ENCODE measurements at regions of chr12 and their contacts with region 1.

Region 1: DNA sequence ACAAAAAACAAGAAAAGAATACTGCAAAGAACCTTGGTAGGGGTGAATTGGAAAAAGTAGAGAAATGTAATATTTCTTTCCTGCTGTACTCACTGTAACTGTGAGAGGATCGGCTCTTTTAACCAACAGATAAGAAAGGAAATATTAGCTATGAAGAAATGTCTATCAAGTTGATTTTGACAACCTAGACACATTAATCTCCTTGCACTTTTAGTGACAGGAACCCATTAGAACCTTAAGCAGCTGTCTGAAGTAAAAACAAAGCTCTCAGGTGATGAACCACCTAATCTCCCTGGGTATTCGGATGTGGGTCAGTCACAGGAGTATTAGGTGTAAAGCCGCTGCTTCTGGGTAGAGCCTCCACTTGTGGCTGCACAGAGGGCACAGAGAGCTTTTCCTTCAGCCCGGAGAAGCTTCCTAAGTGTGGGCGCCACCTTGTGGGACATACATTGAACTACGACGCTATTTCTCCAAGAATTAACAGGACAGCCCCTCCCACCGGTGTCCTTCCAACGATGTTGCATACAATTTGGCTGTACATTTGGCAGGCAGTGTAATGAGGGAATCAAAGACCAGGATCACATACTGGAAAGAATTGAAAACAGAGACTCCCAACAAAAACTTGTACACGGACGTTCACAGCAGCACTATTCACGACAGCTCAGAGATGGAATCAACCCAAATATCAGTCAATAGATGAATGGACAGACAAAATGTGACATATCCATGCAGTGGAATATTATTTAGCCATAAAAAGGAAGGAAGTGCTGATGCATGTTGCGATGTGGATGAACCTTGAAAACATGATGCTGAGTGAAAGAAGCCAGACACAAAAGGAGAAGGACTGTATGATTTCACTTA is 28.9 kb upstream of the MAPKAPK5 start:
- DNase-seq: no peak
- H3K4me3 ChIP-seq: no peak overlapping the region
- H3K27me3 ChIP-seq: no peaks in the 10 kb centered on the region
- CTCF ChIP-seq: peak; percentile 83

Region 2: DNA sequence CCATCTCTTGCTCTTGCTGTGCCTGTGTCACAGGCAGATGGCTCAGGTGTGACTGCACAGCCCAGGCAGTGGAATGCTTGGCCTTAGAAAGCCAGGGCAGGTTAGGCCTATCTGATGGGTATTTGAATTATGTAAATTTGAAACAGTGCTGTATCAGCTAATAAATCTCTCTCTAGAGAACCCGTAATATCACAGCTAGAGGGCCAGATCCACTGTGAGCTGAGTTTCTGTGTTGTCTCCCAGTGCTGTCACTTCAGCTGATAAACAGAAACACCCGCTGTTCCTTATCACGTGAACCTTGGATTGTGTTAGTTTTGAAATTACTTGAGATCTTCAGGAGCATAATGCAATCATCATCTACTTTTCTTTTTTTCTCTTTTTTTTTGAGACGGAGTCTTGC is 67.9 kb before region 1 on chr12:
- CTCF ChIA-PET with region 1: interaction called, 12 read pairs
- POLR2A ChIA-PET with region 1: no interaction called
- DNase-seq: no peak
- H3K4me3 ChIP-seq: no peak overlapping the region
- H3K27me3 ChIP-seq: no peaks in the 10 kb centered on the region
- CTCF ChIP-seq: no peak

Region 3: DNA sequence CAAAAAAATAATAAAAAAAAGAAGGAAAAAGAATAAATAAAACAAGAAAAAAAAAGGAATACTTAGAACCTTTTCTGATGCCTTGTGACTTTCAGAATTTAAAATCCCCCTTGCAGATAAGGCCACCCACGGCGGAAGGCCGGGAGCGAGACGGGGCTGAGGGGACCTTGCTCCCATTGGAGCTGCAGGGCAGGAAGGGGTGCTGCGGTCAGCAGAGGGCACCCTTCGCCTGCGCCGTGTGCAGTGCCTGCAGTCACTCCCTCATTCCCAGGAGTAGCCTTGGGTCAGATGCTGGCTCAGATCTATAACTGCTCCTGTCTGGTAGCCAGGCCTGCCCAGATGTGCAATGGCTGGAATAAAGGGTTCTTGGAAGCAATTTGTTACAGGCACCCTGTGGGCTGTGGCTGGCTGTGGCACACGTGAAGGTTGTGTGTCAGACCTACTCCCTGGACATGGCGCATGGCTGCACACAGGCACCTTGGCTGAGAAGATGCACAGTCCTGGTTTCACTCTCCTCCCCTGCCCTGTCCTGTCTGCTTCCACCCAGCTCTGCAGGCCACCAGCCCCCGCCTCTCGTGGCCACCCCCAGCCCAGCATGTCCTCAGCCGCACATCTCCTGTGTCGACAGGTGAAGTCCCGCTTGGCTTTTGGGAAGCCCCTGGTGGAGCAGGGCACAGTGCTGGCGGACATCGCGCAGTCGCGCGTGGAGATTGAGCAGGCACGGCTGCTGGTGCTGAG is 59.8 kb before region 1 on chr12:
- CTCF ChIA-PET with region 1: interaction called, 106 read pairs
- POLR2A ChIA-PET with region 1: no interaction called
- DNase-seq: no peak
- H3K4me3 ChIP-seq: no peak overlapping the region
- H3K27me3 ChIP-seq: no peaks in the 10 kb centered on the region
- CTCF ChIP-seq: peak; percentile 84

Region 4: DNA sequence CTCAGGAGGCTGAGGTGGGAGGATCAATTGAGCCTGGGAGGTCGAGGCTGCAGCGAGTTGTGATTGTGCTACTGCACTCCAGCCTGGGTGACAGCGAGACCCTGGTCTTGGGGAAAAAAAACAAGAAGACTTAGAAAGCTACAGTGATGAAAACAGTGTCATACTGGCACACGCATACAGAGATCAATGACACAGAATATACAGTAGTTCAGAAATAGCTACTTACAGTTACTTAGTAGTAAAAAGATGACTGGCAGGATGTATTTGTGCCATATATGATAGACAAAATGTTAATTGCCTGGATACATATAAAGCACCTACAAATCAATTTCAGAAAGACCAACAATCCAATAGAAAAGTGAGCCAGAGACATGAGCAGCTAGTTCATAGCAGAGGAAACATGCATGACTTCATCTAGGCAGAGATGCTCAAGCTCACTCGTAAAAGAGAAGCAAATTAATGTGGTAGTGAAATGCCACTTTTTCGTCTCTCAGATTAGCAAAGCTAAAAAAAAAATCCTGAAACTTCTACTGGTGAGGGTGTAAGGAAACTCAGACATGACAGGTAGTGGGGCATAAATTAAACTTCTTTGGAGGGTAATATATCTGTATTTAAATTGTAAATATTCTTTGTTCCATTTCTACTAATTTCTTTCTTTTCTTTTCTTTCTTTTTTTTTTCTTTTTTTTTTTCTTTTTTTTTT is 48.8 kb before region 1 on chr12:
- CTCF ChIA-PET with region 1: interaction called, 22 read pairs
- POLR2A ChIA-PET with region 1: no interaction called
- DNase-seq: no peak
- H3K4me3 ChIP-seq: no peak overlapping the region
- H3K27me3 ChIP-seq: no peaks in the 10 kb centered on the region
- CTCF ChIP-seq: no peak

Region 5: DNA sequence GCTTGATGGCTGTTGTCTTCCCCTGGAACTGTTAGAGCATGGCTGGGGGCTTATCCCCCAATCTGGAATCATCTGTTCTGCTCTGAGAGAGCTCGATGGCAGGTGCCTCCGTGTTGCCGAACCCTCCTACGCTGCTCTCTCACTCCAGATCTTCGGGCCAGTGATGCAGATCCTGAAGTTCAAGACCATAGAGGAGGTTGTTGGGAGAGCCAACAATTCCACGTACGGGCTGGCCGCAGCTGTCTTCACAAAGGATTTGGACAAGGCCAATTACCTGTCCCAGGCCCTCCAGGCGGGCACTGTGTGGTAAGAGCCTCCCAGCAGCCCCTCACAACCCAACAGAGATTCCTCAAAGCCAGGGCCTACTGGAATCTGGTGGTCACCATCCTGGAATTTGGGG is 13.4 kb before region 1 on chr12:
- CTCF ChIA-PET with region 1: interaction called, 10 read pairs
- POLR2A ChIA-PET with region 1: no interaction called
- DNase-seq: no peak
- H3K4me3 ChIP-seq: no peak overlapping the region
- H3K27me3 ChIP-seq: no peaks in the 10 kb centered on the region
- CTCF ChIP-seq: no peak

Measured in BJ (cell line).